Left ventricle myocardium inferior (tissue), 1 donor: ENCODE measurements at regions of chr3 and their contacts with region 1.

Region 1: DNA sequence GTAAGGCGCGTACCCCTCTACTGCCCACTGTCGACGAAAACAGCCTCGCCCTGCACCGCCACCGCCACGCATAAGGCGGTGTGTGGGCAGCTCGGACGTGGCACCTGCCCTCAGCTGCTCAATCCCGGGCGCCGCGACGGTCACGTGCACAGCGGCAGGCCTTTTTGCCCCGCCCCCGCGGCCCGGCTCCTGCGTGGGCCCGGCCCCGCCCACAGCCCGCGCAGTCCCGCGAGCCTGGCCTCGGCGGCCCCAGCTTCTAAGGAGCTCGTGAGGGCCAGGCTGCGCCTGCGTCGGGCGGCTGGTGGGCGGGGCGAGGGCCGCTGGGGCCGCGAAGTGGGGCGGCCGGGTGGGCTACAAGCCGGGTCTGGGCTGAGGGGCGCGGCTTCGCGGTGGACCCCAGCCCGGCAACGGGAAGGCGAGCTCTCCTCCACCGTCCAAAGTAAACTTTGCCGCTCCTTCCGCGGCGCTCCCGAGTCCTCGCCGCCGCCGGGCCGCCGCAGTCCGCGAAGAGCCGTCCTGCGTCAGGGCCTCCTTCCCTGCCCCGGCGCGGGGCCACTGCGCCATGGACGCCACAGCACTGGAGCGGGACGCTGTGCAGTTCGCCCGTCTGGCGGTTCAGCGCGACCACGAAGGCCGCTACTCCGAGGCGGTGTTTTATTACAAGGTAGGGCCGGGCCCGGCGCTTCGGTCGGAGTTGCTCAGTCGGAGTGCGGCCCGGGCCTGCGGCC is at the start of gene CAPN7:
- DNase-seq: peak; percentile 96
- H3K4me3 ChIP-seq: peak within 1 kb of the TSS; percentile 97
- H3K27ac ChIP-seq: peak within 1 kb of the TSS; percentile 98
- H3K4me1 ChIP-seq: peaks cover 56% of the 10 kb centered on the region
- H3K27me3 ChIP-seq: no peaks in the 10 kb centered on the region
- CTCF ChIP-seq: peak; percentile 55
- total RNA-seq, gene CAPN7: 26.2 TPM

Region 2: GRCh38 chr3:15120986-15121385 is 85.1 kb before region 1 on chr3:
- intact Hi-C with region 1: no loop called
- DNase-seq: no peak
- H3K4me3 ChIP-seq: no peak overlapping the region
- H3K27ac ChIP-seq: no peak overlapping the region
- H3K4me1 ChIP-seq: peaks cover 18% of the 10 kb centered on the region
- H3K27me3 ChIP-seq: peaks cover 19% of the 10 kb centered on the region
- CTCF ChIP-seq: no peak

Region 3: GRCh38 chr3:15253023-15253697 is 47.1 kb after region 1 on chr3:
- intact Hi-C with region 1: no loop called
- DNase-seq: no peak
- H3K4me3 ChIP-seq: no peak overlapping the region
- H3K27ac ChIP-seq: no peak overlapping the region
- H3K4me1 ChIP-seq: peaks cover 35% of the 10 kb centered on the region
- H3K27me3 ChIP-seq: no peaks in the 10 kb centered on the region
- CTCF ChIP-seq: no peak

Region 4: GRCh38 chr3:15265655-15266509 is 59.8 kb after region 1 on chr3:
- intact Hi-C with region 1: no loop called
- DNase-seq: no peak
- H3K4me3 ChIP-seq: no peak overlapping the region
- H3K27ac ChIP-seq: no peak overlapping the region
- H3K4me1 ChIP-seq: peaks cover 43% of the 10 kb centered on the region
- H3K27me3 ChIP-seq: no peaks in the 10 kb centered on the region
- CTCF ChIP-seq: no peak

Region 5: DNA sequence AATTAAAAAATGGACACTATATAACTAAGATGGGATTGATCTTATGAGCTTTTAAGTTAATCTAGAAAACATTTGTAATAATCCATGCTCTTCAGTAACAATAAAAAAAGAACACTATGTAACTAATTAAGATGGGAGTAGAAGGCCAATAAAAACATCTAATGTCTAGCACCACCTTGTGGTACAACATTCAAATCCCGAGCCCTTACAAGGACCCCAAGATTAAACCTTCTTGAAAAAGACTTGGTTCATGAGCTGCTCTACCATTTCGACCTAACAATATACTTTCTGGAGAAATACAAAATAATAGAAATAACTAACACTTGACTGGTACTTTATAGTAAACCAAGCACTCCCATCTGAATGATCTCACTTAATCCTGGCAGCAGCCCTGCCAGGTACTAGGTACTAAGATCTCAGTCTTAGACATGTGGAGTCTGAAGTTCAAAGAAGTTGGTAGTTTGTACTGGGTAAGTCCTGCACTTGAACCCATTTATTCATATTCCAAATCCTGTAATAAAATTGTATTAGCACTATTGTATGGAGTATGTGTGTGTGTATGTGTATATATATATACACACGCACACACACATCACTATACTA is 199.5 kb after region 1 on chr3:
- intact Hi-C with region 1: loop called (anchors 10 kb)
- DNase-seq: no peak
- H3K4me3 ChIP-seq: no peak overlapping the region
- H3K27ac ChIP-seq: no peak overlapping the region
- H3K4me1 ChIP-seq: no peaks in the 10 kb centered on the region
- H3K27me3 ChIP-seq: no peaks in the 10 kb centered on the region
- CTCF ChIP-seq: peak; percentile 74